ENCODE measurements at regions of chr12 and their contacts with region 1.

Region 1: DNA sequence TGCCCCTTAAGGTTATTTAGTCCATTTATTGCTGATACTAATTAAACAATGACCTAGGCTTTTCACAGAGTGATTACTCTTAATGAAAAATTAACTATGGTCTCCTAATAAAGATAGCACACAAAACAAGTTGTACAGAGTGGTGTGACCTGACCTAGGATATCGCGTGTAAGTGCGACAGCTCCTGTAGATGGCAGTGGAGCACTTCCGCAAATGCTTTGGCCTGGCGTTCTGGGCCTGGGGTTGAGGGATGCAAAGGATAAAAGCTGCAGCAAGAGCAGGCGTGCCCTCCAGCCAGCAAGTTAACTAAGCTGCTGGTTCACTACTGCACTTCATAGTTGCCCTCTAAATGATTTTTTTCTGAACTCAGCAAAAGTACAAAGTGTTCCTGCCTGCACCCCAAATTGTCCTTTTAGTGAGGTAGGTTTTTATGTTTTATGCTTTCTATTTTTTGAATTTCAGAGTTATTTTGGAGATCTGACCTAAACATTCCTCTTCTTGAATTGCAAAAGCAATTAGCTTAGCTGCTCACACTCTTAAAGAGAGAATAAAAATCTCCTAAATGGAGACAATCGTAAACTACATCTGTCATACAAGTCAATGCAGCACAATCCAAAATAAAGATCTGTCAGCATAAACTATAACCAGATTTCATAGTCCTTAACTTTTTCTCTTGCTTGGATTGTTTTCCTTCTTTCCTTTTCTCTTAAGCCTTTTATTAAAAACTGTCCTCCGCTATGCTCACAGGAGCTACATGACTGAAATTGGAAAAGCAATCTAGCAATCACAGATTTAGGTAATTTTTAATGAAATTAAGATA is 379.6 kb downstream of the LRIG3 start:
- DNase-seq: peak; percentile 54
- H3K4me3 ChIP-seq: no peak overlapping the region
- CTCF ChIP-seq: peak; percentile 85

Region 2: GRCh38 chr12:58346032-58346632 is 194.6 kb before region 1 on chr12:
- CTCF ChIA-PET with region 1: interaction called, 44 read pairs
- POLR2A ChIA-PET with region 1: no interaction called
- DNase-seq: no peak
- H3K4me3 ChIP-seq: no peak overlapping the region
- CTCF ChIP-seq: peak; percentile 29

Region 3: GRCh38 chr12:58416236-58416635 is 124.5 kb before region 1 on chr12:
- CTCF ChIA-PET with region 1: interaction called, 14 read pairs
- POLR2A ChIA-PET with region 1: no interaction called
- DNase-seq: peak; percentile 69
- H3K4me3 ChIP-seq: no peak overlapping the region
- CTCF ChIP-seq: peak; percentile 8

Region 4: DNA sequence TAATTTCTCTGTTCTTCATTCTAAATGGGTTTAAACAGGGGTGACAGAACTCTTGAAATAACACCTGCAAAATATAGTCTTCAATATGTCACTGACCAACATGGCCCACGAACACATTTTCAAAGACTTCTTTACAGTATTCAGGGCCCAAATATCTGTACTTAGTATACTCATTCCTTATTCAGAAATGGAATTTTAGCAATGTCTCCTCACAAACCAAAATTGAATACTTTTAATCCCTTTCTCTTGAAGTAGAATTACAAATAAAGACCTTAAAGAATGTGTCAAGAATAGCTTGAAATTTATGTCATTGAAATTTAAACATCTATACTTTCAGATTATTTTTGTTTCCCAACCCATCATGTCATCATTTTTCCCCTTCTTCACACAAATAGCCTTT is 116.5 kb after region 1 on chr12:
- CTCF ChIA-PET with region 1: interaction called, 12 read pairs
- POLR2A ChIA-PET with region 1: no interaction called
- DNase-seq: no peak
- H3K4me3 ChIP-seq: no peak overlapping the region
- CTCF ChIP-seq: no peak

Region 5: DNA sequence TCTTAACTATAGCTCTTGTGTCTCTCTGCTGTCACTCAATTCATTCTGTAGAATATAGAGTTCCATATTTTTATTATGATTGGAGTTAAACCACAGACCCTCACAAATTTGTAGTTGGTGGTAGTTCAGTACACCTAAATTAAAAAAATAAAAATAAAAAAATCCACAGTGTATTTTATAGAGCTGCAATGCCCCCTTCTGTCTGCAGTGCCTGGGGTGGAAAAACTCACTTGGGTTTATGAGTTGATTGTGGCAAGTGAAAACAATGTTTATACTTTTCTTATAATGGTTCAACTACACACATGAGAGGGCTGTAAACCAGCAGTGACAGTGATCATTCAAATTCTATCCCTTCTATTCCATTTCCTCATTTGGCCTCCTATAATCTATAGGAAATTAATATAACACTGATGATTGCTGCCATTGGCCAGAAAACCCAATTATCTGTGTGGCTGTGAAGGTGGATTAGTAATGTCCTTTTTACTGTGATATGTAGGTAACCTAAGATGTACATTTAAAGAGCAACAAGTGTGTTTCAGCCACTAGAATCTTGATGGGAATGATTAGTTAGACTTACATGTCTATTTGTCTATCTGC is 546.5 kb after region 1 on chr12:
- CTCF ChIA-PET with region 1: interaction called, 108 read pairs
- POLR2A ChIA-PET with region 1: interaction called, 4 read pairs
- DNase-seq: no peak
- H3K4me3 ChIP-seq: no peak overlapping the region
- CTCF ChIP-seq: peak; percentile 58

Region 6: GRCh38 chr12:59113831-59114615 is 573.3 kb after region 1 on chr12:
- CTCF ChIA-PET with region 1: interaction called, 53 read pairs
- POLR2A ChIA-PET with region 1: interaction called, 3 read pairs
- DNase-seq: peak; percentile 42
- H3K4me3 ChIP-seq: no peak overlapping the region
- CTCF ChIP-seq: peak; percentile 89

Region 7: GRCh38 chr12:59164991-59165718 is 624.5 kb after region 1 on chr12:
- CTCF ChIA-PET with region 1: interaction called, 42 read pairs
- POLR2A ChIA-PET with region 1: no interaction called
- DNase-seq: no peak
- H3K4me3 ChIP-seq: no peak overlapping the region
- CTCF ChIP-seq: peak; percentile 15

Region 8: DNA sequence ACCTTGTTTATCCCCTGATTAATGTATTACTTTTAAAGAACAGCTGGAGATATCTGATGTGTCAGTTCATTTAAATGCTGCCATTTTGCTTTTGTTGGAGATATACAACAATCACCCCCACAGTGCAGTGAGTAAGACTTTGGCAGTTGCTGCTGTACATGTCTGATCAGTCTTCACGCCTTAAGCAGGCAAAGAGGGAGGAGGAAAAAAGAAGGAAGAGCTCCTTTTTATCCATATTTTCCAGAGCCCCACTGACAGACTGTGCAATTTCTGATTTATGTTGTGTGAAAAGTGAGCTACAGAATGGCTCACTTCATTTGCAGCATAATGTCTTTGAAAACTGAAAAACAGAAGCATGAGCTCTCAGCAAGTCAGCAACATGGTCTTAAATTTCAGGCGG is 699.4 kb after region 1 on chr12:
- CTCF ChIA-PET with region 1: no interaction called
- POLR2A ChIA-PET with region 1: no interaction called
- DNase-seq: no peak
- H3K4me3 ChIP-seq: no peak overlapping the region
- CTCF ChIP-seq: no peak